Thyroid gland (tissue), 4 donors: ENCODE measurements at regions of chr6 and their contacts with region 1.

Region 1: GRCh38 chr6:36765594-36766398 is 68.2 kb downstream of the RAB44 start:
- DNase-seq: peak; percentile 77 to 82
- H3K4me3 ChIP-seq: no peak overlapping the region
- H3K27ac ChIP-seq: no peak overlapping the region
- H3K4me1 ChIP-seq: peaks cover 0 to 7% of the 10 kb centered on the region in 2 donors
- H3K27me3 ChIP-seq: no peaks in the 10 kb centered on the region
- CTCF ChIP-seq: peak; percentile 30 to 85 (median 81)
- POLR2A ChIP-seq: no peak

Region 2: DNA sequence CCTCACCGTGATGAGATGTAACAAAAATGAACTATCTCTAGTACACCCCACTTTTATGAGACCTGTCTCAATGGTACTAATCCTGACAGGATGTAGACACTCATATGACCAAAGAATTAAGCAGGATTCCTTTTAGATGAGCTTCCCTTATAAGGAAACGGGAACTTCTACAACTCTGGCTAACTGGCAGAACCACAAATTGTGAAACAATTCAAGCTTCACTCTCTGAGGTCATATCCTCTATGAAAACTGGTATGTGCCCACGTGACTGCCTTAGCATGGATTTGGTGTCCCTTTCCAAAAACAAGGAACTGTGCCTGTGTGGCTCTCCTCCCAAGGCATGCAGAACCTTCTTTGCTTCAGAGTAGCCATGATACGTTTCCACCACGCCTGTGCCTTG is 87.5 kb after region 1 on chr6:
- intact Hi-C with region 1: loop called (anchors 2 kb)
- DNase-seq: no peak
- H3K4me3 ChIP-seq: no peak overlapping the region
- H3K27ac ChIP-seq: peak overlapping the region in 1 of 3 donors; percentile 14
- H3K4me1 ChIP-seq: peaks cover 21 to 22% of the 10 kb centered on the region in 2 donors
- H3K27me3 ChIP-seq: no peaks in the 10 kb centered on the region
- CTCF ChIP-seq: no peak
- POLR2A ChIP-seq: no peak